ENCODE measurements at regions of chr7 and their contacts with region 1.

Region 1: DNA sequence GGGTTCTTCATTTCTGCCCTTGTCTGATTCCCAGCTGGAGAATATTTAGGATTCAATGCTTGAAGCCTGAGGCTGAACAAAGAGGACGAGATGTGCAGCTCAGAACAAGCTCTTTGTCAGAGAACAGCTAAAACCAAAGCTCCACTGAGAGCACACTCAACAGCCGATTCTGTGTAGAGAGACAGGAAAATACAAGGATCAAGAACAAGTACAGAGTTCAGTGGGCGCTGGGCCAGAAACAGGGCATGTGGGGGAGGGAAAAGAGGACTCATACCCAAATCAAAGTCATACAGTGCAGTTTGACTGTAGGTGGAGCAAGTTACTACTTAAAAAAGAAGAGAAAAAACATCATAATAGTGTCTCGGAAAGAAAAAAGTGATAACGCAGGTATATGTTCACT is at the start of gene AGMO:
- ATAC-seq: peak in 4 of 8 experiments; percentile 7 to 41 (median 28)
- H3K4me3 ChIP-seq: no peak within 1 kb of the TSS
- H3K27ac ChIP-seq: no peak within 1 kb of the TSS
- H3K4me1 ChIP-seq: peaks cover 0 to 3% of the 10 kb centered on the region in 2 donors
- total RNA-seq, gene AGMO: 0.13 to 8.9 (median 0.50) TPM in 6 of 8 experiments, not detected in the others

Region 2: GRCh38 chr7:15652776-15653290 is 91.0 kb after region 1 on chr7:
- in situ Hi-C with region 1: loop called in 1 of 9 experiments (anchors 25 kb)
- ATAC-seq: peak in 1 of 8 experiments; percentile 59
- H3K4me3 ChIP-seq: no peak overlapping the region
- H3K27ac ChIP-seq: no peak overlapping the region
- H3K4me1 ChIP-seq: no peaks in the 10 kb centered on the region

Region 3: GRCh38 chr7:15821484-15822427 is 259.9 kb after region 1 on chr7:
- in situ Hi-C with region 1: no loop called
- ATAC-seq: peak in 2 of 8 experiments; percentile 24 to 71
- H3K4me3 ChIP-seq: no peak overlapping the region
- H3K27ac ChIP-seq: no peak overlapping the region
- H3K4me1 ChIP-seq: no peaks in the 10 kb centered on the region

Measured in motor neuron (in vitro differentiated cells).